Activated CD4-positive, alpha-beta T cell treated with anti-CD3 and anti-CD28 coated beads, Interleukin-2, amount 10 ng/mL, durations not matched to agents 24 days and 14 days (primary cell): ENCODE measurements at regions of chr1 and their contacts with region 1.

Region 1: DNA sequence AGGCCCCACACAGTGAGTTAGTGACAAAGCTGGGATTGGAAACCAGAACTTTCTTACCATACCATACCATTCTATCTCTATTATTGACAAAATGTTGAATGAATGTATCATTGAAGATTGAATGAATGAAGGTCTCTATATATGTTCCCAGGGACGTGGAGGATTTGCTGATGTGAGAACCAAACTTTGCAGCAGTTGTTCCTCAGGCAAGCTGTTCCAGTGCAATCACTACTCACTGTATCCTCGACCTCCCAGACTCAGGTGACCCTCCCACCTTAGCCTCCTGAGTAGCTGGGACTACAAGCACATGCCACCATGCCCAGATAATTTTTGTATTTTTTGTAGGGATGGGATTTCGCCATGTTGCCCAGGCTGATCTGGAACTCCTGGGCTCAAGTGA is 11.6 kb upstream of the LIN28A start:
- DNase-seq: no peak
- H3K4me3 Mint-ChIP-seq: no peak overlapping the region
- H3K27ac Mint-ChIP-seq: no peak overlapping the region
- H3K4me1 Mint-ChIP-seq: peaks cover 4% of the 10 kb centered on the region
- H3K27me3 Mint-ChIP-seq: peaks cover 24% of the 10 kb centered on the region

Region 2: GRCh38 chr1:26363549-26364448 is 35.2 kb before region 1 on chr1:
- intact Hi-C with region 1: loop called (anchors 5 kb)
- DNase-seq: peak; percentile 96
- H3K4me3 Mint-ChIP-seq: no peak overlapping the region
- H3K27ac Mint-ChIP-seq: peak overlapping the region; percentile 11
- H3K4me1 Mint-ChIP-seq: peaks cover 39% of the 10 kb centered on the region
- H3K27me3 Mint-ChIP-seq: peaks cover 18% of the 10 kb centered on the region